Heart right ventricle (tissue), 16 donors: ENCODE measurements at regions of chr6 and their contacts with region 1.

Region 1: DNA sequence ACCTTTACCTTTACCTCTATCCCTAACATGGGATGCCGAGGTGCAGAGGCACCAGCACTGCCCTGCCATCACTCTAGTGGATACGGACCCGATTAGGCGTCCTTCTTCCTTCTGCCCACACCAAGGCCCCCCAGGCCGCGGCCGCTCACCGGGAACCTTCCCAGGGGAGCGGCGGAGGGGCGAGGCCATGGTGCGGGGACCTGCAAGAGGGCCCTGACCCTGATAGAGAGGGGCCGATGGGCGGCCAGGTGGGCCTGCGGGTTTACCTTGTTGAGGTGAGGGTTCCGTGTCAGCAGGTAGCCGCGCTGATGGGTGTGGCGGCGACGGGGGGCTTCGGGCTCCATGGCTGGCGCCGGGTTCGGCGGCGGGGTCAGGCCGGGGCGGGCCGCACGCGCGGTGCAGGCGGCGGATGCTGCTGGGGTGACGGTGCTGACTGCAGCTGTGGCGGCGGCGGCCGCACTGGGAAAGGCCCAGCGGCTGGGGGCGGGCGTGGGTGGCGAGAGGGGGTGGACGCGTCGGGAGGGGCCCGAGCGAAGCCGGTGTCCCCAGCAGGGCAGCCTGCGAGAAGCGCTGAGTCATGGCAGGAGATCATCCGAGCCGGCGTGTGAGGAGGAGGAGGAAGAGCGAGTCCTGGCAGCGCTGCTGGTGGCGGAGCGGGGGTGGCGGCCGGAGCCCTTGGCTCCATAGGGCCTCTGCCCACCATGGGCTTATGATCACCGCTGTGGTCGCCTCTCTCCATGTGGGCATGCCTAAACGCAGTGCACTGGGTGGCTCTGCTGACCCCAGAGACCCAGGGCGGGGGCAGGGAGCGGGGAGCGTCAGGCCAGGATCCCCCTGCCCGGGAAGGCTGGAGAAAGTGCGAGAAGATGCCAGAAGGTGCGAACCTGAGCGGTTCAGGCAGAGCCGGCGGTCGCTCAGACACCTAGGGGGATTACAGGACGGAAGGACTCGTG is at the start of gene ME1:
- DNase-seq: peak; percentile 68 to 80
- ATAC-seq: peak; percentile 92 to 99 (median 93)
- H3K4me3 ChIP-seq: peak within 1 kb of the TSS; percentile 56 to 87 (median 72)
- H3K27ac ChIP-seq: peak within 1 kb of the TSS in 9 of 10 donors; percentile 54 to 87 (median 70)
- H3K4me1 ChIP-seq: peaks cover 0 to 29% (median 4%) of the 10 kb centered on the region in 9 donors
- H3K27me3 ChIP-seq: no peaks in the 10 kb centered on the region
- CTCF ChIP-seq: peak in 1 of 9 donors; percentile 30
- total RNA-seq, gene ME1: 13.2 to 26.6 (median 18.0) TPM

Region 2: GRCh38 chr6:83474309-83474708 is 43.4 kb after region 1 on chr6:
- intact Hi-C with region 1: loop called in 1 of 10 experiments (anchors 5 kb)
- DNase-seq: peak in 1 of 2 donors; percentile 10
- ATAC-seq: peak in 7 of 8 donors; percentile 20 to 89 (median 64)
- H3K4me3 ChIP-seq: no peak overlapping the region
- H3K27ac ChIP-seq: no peak overlapping the region
- H3K4me1 ChIP-seq: peaks cover 0 to 19% (median 5%) of the 10 kb centered on the region in 9 donors
- H3K27me3 ChIP-seq: no peaks in the 10 kb centered on the region
- CTCF ChIP-seq: no peak

Region 3: GRCh38 chr6:83546636-83547035 is 115.7 kb after region 1 on chr6:
- intact Hi-C with region 1: no loop called
- DNase-seq: no peak
- ATAC-seq: no peak
- H3K4me3 ChIP-seq: no peak overlapping the region
- H3K27ac ChIP-seq: no peak overlapping the region
- H3K4me1 ChIP-seq: no peaks in the 10 kb centered on the region
- H3K27me3 ChIP-seq: no peaks in the 10 kb centered on the region
- CTCF ChIP-seq: no peak